ENCODE measurements at regions of chr6 and their contacts with region 1.

Region 1: DNA sequence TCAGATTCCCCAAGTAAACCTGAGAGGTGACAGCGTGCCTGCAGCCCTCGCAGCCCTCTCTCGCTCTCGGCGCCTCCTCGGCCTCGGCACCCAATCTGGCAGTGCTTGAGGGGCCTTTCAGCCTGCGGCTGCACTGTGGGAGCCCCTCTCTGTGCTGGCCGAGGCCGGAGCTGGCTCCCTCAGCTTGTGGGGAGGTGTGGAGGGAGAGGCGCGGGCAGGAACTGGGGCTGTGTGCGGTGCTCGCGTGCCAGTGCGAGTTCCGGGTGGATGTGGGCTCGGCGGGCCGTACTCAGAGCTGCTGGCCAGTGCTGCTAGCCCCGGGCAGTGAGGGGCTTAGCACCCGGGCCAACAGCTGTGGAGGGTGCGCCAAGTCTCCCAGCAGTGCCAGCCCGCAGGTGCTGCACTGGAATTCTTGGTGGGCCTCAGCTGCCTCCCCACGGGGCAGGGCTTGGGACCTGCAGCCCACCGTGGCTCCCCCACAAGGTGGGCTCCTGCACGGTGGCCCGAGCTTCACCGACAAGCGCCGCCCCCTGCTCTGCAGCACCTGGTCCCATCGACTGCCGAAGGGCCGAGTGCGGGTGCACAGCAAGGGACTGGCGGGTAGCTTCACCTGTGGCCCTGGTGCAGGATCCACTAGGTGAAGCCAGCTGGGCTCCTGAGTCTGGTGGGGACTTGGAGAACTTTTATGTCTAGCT is 809.7 kb upstream of the ADGRB3 start:
- DNase-seq: peak in 2 of 5 donors; percentile 18 to 61
- ATAC-seq: no peak
- H3K4me3 ChIP-seq: no peak overlapping the region
- H3K27ac ChIP-seq: no peak overlapping the region
- H3K4me1 ChIP-seq: no peaks in the 10 kb centered on the region
- H3K27me3 ChIP-seq: no peaks in the 10 kb centered on the region
- CTCF ChIP-seq: no peak
- POLR2A ChIP-seq: no peak

Region 2: GRCh38 chr6:67676886-67677285 is 148.5 kb before region 1 on chr6:
- intact Hi-C with region 1: no loop called
- DNase-seq: no peak
- ATAC-seq: no peak
- H3K4me3 ChIP-seq: no peak overlapping the region
- H3K27ac ChIP-seq: no peak overlapping the region
- H3K4me1 ChIP-seq: no peaks in the 10 kb centered on the region
- H3K27me3 ChIP-seq: no peaks in the 10 kb centered on the region
- CTCF ChIP-seq: no peak
- POLR2A ChIP-seq: no peak

Region 3: DNA sequence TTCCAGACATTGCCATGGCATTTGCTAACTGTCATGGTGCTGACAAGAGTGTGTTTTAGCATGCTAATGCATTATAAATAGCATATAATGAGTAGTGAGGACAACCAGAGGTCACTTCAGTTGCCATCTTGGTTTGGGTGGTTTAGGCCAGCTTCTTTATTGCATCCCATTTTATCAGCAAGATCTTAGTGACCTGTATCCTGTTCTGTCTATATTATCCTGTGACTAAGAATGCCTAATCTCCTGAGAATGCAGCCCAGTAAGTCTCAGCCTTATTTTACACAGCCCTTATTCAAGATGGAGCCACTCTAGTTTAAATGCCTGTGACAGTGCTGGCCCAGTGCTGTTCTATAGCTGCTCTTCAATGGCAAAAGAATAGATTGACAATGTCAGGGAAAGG is 28.8 kb after region 1 on chr6:
- intact Hi-C with region 1: loop called in 1 of 10 experiments (anchors 1 kb)
- DNase-seq: no peak
- ATAC-seq: no peak
- H3K4me3 ChIP-seq: no peak overlapping the region
- H3K27ac ChIP-seq: no peak overlapping the region
- H3K4me1 ChIP-seq: no peaks in the 10 kb centered on the region
- H3K27me3 ChIP-seq: no peaks in the 10 kb centered on the region
- CTCF ChIP-seq: no peak
- POLR2A ChIP-seq: no peak

Region 4: GRCh38 chr6:67875877-67876383 is 50.6 kb after region 1 on chr6:
- intact Hi-C with region 1: no loop called
- DNase-seq: no peak
- ATAC-seq: no peak
- H3K4me3 ChIP-seq: no peak overlapping the region
- H3K27ac ChIP-seq: no peak overlapping the region
- H3K4me1 ChIP-seq: no peaks in the 10 kb centered on the region
- H3K27me3 ChIP-seq: no peaks in the 10 kb centered on the region
- CTCF ChIP-seq: no peak
- POLR2A ChIP-seq: no peak

Measured in heart left ventricle (tissue), 16 donors.